Astrocyte of the cerebellum (primary cell): ENCODE measurements at regions of chr1 and their contacts with region 1.

Region 1: DNA sequence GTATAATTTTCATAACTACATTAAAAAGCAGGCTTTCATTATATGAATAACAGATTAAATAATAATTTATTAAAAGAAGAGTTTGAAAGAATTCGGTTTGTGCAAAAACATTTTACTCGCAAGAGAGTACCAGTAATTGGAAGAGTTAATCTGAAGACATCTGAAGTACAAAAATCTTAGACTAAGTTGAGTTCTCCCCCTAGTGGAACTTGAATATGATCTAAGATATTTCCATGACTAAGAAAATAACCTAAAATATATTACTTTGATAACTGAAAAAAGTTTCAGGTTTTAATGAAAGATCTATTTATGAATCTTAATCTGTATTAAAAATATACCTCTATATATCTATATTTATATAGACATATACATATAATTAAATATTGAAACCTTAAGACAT is 112.5 kb upstream of the GFI1 start:
- DNase-seq: peak; percentile 24
- H3K4me3 ChIP-seq: no peak overlapping the region
- CTCF ChIP-seq: no peak

Region 2: DNA sequence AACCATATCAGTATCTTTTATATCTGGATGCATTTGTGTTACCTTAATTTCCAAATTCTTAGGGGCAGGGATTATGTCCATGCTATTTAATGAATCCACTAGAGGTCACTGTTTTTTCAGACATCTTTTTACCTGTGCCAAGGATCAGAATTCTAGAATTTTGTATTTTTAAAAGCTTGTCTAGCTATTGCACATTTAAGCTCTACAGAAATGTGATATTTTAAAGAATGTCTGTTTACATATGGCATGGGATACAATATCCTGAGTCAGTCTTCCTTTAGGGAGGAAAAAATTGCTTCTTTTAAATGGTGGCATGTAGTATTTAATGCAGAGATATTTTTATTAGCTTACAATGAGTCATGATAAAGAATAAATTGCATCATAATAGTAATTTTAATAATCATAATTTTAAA is 289.0 kb before region 1 on chr1:
- in situ Hi-C with region 1: loop called (anchors 25 kb)
- DNase-seq: peak; percentile 9
- H3K4me3 ChIP-seq: no peak overlapping the region
- CTCF ChIP-seq: peak; percentile 31

Region 3: DNA sequence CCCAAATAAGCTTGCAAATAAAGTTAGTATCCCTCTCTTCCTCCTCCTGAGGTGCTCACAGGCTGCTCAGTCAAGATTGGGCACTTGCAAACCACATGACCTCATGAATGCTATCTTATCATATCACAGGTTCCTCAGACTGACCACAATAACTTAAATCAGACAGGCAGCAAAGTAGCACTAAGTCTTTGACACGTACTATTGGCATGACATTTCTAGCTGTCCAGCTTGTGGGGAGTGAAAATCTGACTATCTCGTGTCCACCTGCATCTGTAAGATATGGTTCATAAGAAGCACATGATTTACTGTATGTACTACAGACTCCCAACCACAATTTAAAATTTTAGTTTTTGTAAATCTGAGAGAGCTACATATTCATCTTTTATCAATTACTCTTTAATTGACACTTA is 54.4 kb before region 1 on chr1:
- in situ Hi-C with region 1: no loop called
- DNase-seq: no peak
- H3K4me3 ChIP-seq: no peak overlapping the region
- CTCF ChIP-seq: no peak

Region 4: DNA sequence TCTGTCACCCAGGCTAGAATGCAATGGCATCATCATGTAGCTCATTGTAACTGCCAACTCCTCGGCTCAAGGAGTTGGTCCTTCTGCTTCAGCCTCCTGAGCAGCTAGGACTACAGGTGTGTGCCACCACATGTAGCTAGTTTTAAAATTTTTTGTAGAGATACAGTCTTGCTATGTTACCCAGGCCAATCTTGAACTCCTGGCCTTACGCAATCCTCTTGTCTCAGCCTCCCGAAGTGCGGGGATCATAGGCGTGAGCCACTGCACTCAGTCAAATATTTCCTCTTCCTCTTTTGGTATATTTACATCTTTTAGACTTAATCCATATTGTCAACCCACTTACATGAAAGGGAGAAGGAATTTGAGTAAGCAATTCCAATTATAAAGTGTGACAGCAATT is 64.6 kb after region 1 on chr1:
- in situ Hi-C with region 1: no loop called
- DNase-seq: no peak
- H3K4me3 ChIP-seq: no peak overlapping the region
- CTCF ChIP-seq: no peak